Panc1 (cell line): ENCODE measurements at regions of chr1 and their contacts with region 1.

Region 1: GRCh38 chr1:43414634-43415223 is 25.0 kb downstream of the SZT2 start:
- DNase-seq: peak; percentile 20
- ATAC-seq: peak; percentile 93
- H3K4me3 ChIP-seq: no peak overlapping the region
- H3K27ac ChIP-seq: no peak overlapping the region
- H3K4me1 ChIP-seq: no peaks in the 10 kb centered on the region
- H3K27me3 ChIP-seq: no peaks in the 10 kb centered on the region
- CTCF ChIP-seq: peak; percentile 76

Region 2: GRCh38 chr1:43227143-43227764 is 187.5 kb before region 1 on chr1:
- CTCF ChIA-PET with region 1: interaction called, 23 read pairs
- POLR2A ChIA-PET with region 1: no interaction called
- in situ Hi-C with region 1: no loop called
- intact Hi-C with region 1: loop called (anchors 5 kb)
- DNase-seq: peak; percentile 58
- ATAC-seq: peak; percentile 94
- H3K4me3 ChIP-seq: no peak overlapping the region
- H3K27ac ChIP-seq: peak overlapping the region; percentile 10; the same call in 1 of the 2 replicates
- H3K4me1 ChIP-seq: 0 out of 2 replicates have a peak, but pooled peaks cover 3% of the 10 kb centered on the region
- H3K27me3 ChIP-seq: no peaks in the 10 kb centered on the region
- CTCF ChIP-seq: peak; percentile 94

Region 3: GRCh38 chr1:43453446-43454228 is 38.9 kb after region 1 on chr1 and contains the start of gene HYI:
- CTCF ChIA-PET with region 1: interaction called, 13 read pairs
- POLR2A ChIA-PET with region 1: no interaction called
- in situ Hi-C with region 1: no loop called
- intact Hi-C with region 1: no loop called
- DNase-seq: peak; percentile 47
- ATAC-seq: peak; percentile 83
- H3K4me3 ChIP-seq: peak within 1 kb of the TSS; percentile 49 to 58
- H3K27ac ChIP-seq: peak within 1 kb of the TSS; percentile 96
- H3K4me1 ChIP-seq: peaks cover 17% of the 10 kb centered on the region
- H3K27me3 ChIP-seq: no peaks in the 10 kb centered on the region
- CTCF ChIP-seq: no peak
- total RNA-seq, gene HYI: 55.3 TPM

Region 4: GRCh38 chr1:43743206-43743605 is 328.5 kb after region 1 on chr1:
- CTCF ChIA-PET with region 1: no interaction called
- POLR2A ChIA-PET with region 1: no interaction called
- in situ Hi-C with region 1: no loop called
- intact Hi-C with region 1: no loop called
- DNase-seq: no peak
- ATAC-seq: no peak
- H3K4me3 ChIP-seq: no peak overlapping the region
- H3K27ac ChIP-seq: no peak overlapping the region
- H3K4me1 ChIP-seq: no peaks in the 10 kb centered on the region
- H3K27me3 ChIP-seq: no peaks in the 10 kb centered on the region
- CTCF ChIP-seq: no peak